BJ (cell line): ENCODE measurements at regions of chr1 and their contacts with region 1.

Region 1: GRCh38 chr1:81549604-81550127 is 251.1 kb upstream of the ADGRL2 start:
- DNase-seq: no peak
- H3K4me3 ChIP-seq: no peak overlapping the region
- H3K27me3 ChIP-seq: no peaks in the 10 kb centered on the region
- CTCF ChIP-seq: peak; percentile 59

Region 2: DNA sequence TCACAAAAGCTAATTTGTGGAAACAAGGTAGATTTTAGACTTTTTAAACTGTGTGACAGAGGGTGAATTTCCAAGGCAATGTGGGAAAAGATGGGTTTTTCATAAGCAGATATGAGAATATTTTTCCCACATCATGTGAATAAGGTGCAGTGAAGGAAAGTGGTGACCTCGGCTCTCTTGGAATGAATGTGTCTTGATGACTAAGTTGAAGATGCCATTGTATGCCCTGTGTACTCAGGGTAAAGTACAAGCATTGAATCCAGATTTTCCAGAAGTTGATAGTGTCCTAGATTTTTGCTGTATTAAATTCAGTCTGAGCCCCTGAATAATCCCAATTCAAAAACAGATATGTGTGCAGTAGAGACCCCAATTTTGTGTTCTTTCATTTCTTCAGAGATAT is 191.5 kb before region 1 on chr1:
- CTCF ChIA-PET with region 1: no interaction called
- POLR2A ChIA-PET with region 1: no interaction called
- DNase-seq: no peak
- H3K4me3 ChIP-seq: no peak overlapping the region
- H3K27me3 ChIP-seq: no peaks in the 10 kb centered on the region
- CTCF ChIP-seq: no peak

Region 3: DNA sequence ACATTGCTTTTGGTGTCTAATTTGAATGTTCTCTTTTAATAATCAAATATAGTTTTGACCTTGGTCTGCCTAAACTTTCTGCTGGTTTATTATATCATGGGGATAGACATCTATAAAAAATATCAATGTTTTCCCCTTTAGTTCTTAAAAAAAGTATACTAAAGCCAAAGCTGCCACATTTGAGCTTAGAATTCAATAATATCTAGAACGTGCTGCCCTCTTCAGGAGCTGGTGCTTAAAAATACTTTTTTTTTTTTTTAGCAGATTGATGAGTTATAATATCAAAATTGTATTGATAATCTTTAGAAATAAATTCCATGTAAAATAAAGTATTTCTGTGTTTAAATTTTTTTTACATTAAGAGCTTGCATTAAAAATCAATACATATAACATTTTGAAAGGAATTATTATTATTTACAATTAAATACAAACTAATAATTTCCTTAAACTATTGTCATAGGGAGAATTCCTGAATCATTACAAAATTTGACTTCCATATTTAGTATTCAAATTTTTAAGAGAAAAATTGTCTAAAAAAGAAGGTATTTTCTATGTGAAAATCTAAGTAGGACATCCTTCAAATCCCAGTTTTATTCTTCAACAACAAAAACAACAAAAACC is 210.9 kb after region 1 on chr1:
- CTCF ChIA-PET with region 1: interaction called, 55 read pairs
- POLR2A ChIA-PET with region 1: no interaction called
- DNase-seq: no peak
- H3K4me3 ChIP-seq: no peak overlapping the region
- H3K27me3 ChIP-seq: no peaks in the 10 kb centered on the region; the same call in 1 of the 2 replicates
- CTCF ChIP-seq: peak; percentile 44; the same call in 1 of the 2 replicates